ENCODE measurements at regions of chr3 and their contacts with region 1.

Region 1: DNA sequence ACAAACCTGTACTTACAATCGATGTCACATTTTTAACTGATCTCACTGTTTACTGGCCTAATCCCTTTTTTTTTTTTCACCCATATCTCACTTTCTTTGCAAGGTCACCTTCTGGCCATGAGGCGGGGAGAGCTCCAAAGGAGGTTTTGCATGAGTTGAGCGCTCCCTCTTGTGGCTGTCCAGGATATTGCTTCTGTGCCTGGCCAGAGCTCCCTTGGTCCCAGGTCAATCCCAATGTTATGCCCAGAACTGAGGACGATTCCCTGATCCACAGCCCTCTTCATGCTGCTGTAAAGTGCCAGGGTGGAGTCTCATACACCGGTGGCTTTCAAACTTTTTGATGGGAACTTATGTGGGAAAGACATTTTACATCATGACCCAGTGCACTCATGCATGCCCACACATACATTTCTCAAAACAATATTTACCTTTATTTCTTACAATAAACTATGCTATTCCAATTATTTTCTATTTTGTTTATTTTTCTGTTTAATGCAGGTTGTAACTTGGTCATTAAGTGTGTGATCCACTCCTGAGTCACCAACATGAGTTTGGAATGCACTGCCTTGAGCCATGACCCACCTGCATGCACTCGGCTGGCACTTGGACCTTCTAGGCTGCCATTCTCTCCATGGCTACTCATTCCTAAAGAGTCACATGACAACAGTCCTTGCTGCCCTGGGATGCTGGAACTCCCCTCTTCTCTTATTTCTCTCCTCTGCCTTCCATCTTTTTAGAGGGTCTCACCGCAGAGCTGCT is 9.6 kb upstream of the SST start:
- DNase-seq: peak; percentile 30 to 57
- ATAC-seq: peak; percentile 89 to 96
- H3K4me3 ChIP-seq: no peak overlapping the region
- H3K27ac ChIP-seq: no peak overlapping the region
- H3K4me1 ChIP-seq: no peaks in the 10 kb centered on the region
- H3K27me3 ChIP-seq: no peaks in the 10 kb centered on the region
- CTCF ChIP-seq: peak; percentile 84 to 93 (median 86)
- POLR2A ChIP-seq: no peak

Region 2: GRCh38 chr3:187210545-187211327 is 469.1 kb before region 1 on chr3:
- in situ Hi-C with region 1: loop called in 1 of 4 experiments (anchors 5 kb)
- intact Hi-C with region 1: no loop called
- DNase-seq: no peak
- ATAC-seq: peak in 1 of 2 donors; percentile 64
- H3K4me3 ChIP-seq: no peak overlapping the region
- H3K27ac ChIP-seq: no peak overlapping the region
- H3K4me1 ChIP-seq: peaks cover 16 to 28% of the 10 kb centered on the region in 2 donors
- H3K27me3 ChIP-seq: no peaks in the 10 kb centered on the region
- CTCF ChIP-seq: no peak
- POLR2A ChIP-seq: no peak

Region 3: GRCh38 chr3:187227658-187228258 is 452.1 kb before region 1 on chr3:
- in situ Hi-C with region 1: loop called in 3 of 4 experiments (anchors 10 kb)
- intact Hi-C with region 1: no loop called
- DNase-seq: no peak
- ATAC-seq: no peak
- H3K4me3 ChIP-seq: no peak overlapping the region
- H3K27ac ChIP-seq: no peak overlapping the region
- H3K4me1 ChIP-seq: no peaks in the 10 kb centered on the region
- H3K27me3 ChIP-seq: no peaks in the 10 kb centered on the region
- CTCF ChIP-seq: no peak
- POLR2A ChIP-seq: no peak

Region 4: DNA sequence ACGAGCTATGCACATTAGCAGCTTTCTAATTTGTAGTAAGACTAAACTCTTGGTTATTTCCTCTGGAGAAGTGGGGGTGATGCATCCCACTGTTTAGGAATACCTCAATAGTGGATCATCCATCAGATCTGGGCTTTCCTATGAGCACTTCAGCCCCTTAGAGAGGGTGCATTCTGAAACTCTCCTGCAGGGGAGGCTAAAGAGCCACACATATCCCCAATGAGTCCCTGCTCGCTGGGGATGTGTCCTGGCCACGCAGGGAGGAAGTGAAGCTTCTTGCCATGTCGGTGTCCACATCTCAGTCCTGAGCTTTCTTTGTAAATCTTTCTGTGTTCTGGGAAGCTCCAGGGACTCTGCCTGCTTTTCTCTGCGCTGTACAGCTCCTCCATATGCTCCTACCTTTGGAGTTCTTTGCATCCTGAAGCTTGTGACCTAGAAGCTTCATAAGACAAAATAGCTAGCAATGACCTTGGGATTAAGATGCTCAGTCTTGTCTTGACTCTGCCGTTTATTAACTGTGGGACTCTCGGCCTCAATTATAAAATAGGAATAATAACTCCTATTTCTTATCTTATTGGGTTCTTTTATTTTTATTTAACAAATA is 360.0 kb before region 1 on chr3:
- in situ Hi-C with region 1: loop called (anchors 5 to 10 kb)
- intact Hi-C with region 1: loop called (anchors 1 kb)
- DNase-seq: peak; percentile 12 to 50
- ATAC-seq: peak; percentile 63 to 83
- H3K4me3 ChIP-seq: no peak overlapping the region
- H3K27ac ChIP-seq: no peak overlapping the region
- H3K4me1 ChIP-seq: peaks cover 0 to 4% of the 10 kb centered on the region in 2 donors
- H3K27me3 ChIP-seq: no peaks in the 10 kb centered on the region
- CTCF ChIP-seq: peak; percentile 37 to 76 (median 62)
- POLR2A ChIP-seq: no peak

Region 5: DNA sequence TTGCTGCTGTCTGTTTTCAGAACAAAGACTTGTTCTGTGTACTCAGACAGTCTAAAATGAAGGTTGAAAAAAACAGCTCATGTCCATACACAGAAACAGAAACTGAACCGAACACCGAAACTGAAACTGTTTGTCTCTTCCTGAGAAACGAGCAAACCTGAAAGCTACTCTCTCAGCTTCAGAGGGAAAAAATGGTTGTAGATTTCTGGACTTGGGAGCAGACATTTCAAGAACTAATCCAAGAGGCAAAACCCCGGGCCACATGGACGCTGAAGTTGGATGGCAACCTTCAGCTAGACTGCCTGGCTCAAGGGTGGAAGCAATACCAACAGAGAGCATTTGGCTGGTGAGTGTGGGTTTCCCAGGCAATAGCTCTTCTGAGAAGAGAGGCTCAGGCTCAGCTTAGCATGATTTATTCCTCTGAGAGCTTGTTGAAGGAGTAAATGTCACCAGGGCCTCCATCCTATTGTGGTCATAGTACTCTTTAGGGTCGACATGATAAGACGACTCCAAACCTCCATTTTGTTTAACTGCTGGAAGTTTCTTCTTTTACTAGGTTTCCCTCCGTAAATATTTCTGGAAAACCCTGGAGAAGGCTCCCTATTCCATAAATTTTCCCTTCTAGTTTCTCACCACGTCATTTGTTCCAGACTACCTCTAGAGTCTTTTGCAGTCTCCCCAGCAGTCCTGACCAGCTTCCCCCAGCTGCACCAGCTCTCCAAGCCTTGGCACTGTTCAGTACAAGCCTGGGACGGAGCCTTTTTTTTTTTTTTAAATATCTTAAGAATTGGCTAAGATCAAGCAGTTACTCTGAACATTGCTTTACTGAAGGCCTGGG is 311.3 kb before region 1 on chr3 and contains the start of gene RTP4:
- in situ Hi-C with region 1: no loop called
- intact Hi-C with region 1: no loop called
- DNase-seq: no peak
- ATAC-seq: peak; percentile 52 to 70
- H3K4me3 ChIP-seq: peak within 1 kb of the TSS; percentile 39 to 73 (median 59)
- H3K27ac ChIP-seq: peak within 1 kb of the TSS; percentile 63 to 84 (median 76)
- H3K4me1 ChIP-seq: peaks cover 0 to 8% of the 10 kb centered on the region in 2 donors
- H3K27me3 ChIP-seq: no peaks in the 10 kb centered on the region
- CTCF ChIP-seq: no peak
- POLR2A ChIP-seq: no peak
- total RNA-seq, gene RTP4: 0.16 to 0.87 (median 0.39) TPM in 3 of 4 donors, not detected in the other

Region 6: GRCh38 chr3:187623285-187623814 is 56.5 kb before region 1 on chr3:
- in situ Hi-C with region 1: no loop called
- intact Hi-C with region 1: loop called (anchors 5 kb)
- DNase-seq: no peak
- ATAC-seq: no peak
- H3K4me3 ChIP-seq: no peak overlapping the region
- H3K27ac ChIP-seq: no peak overlapping the region
- H3K4me1 ChIP-seq: no peaks in the 10 kb centered on the region
- H3K27me3 ChIP-seq: no peaks in the 10 kb centered on the region
- CTCF ChIP-seq: no peak
- POLR2A ChIP-seq: no peak

Region 7: GRCh38 chr3:187714404-187714979 is 34.7 kb after region 1 on chr3:
- in situ Hi-C with region 1: no loop called
- intact Hi-C with region 1: loop called (anchors 2 kb)
- DNase-seq: peak; percentile 60 to 80
- ATAC-seq: peak; percentile 70 to 82
- H3K4me3 ChIP-seq: no peak overlapping the region
- H3K27ac ChIP-seq: peak overlapping the region in 3 of 4 donors; percentile 43 to 67 (median 47)
- H3K4me1 ChIP-seq: peaks cover 17 to 24% of the 10 kb centered on the region in 2 donors
- H3K27me3 ChIP-seq: no peaks in the 10 kb centered on the region
- CTCF ChIP-seq: peak; percentile 94 to 96 (median 95)
- POLR2A ChIP-seq: no peak